B cell (primary cell): ENCODE measurements at regions of chr6 and their contacts with region 1.

Region 1: GRCh38 chr6:134166511-134167261 is 114.3 kb upstream of the SLC2A12 start:
- DNase-seq: no peak
- ATAC-seq: no peak
- H3K4me3 ChIP-seq: no peak overlapping the region
- H3K4me3 Mint-ChIP-seq: no peak overlapping the region
- H3K27ac ChIP-seq: no peak overlapping the region
- H3K27ac Mint-ChIP-seq: no peak overlapping the region
- H3K4me1 ChIP-seq: no peaks in the 10 kb centered on the region
- H3K4me1 Mint-ChIP-seq: peaks cover 5% of the 10 kb centered on the region
- H3K27me3 ChIP-seq: no peaks in the 10 kb centered on the region
- H3K27me3 Mint-ChIP-seq: no peaks in the 10 kb centered on the region
- CTCF ChIP-seq: no peak

Region 2: DNA sequence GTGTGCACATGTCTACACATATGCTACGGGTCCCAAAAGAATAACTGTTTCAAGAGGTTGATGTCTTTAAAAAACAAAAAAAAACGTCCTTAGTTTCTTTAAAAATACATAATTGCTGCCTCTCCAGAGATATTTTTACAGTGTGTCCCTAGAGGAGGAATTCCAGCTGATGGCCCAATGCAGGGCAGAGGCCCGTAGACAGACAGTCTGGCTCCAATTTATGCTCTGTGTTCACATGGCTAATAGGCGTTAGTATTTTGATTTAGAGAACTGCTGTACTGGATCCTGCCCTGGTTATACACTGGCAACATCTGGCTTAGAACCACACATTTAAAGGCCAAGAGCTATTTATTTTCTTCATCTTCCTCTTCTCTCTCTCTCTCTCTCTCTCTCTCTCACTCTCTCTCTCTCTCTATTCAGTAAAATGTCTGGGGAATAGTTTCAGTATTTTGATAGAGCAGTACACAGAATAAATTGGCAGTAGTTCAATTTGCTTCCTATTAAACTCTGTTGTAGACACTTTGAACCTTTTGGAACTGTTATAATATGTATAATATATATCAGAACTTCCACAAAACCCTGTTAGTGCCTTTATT is 664.9 kb before region 1 on chr6:
- CTCF ChIA-PET with region 1: no interaction called
- POLR2A ChIA-PET with region 1: no interaction called
- intact Hi-C with region 1: no loop called
- DNase-seq: no peak
- ATAC-seq: no peak
- H3K4me3 ChIP-seq: no peak overlapping the region
- H3K4me3 Mint-ChIP-seq: no peak overlapping the region
- H3K27ac ChIP-seq: no peak overlapping the region
- H3K27ac Mint-ChIP-seq: no peak overlapping the region
- H3K4me1 ChIP-seq: no peaks in the 10 kb centered on the region
- H3K4me1 Mint-ChIP-seq: no peaks in the 10 kb centered on the region
- H3K27me3 ChIP-seq: peaks cover 0 to 5% (median 0%) of the 10 kb centered on the region in 4 experiments
- H3K27me3 Mint-ChIP-seq: peaks cover 18% of the 10 kb centered on the region
- CTCF ChIP-seq: no peak

Region 3: GRCh38 chr6:134145786-134146185 is 20.9 kb before region 1 on chr6:
- CTCF ChIA-PET with region 1: no interaction called
- POLR2A ChIA-PET with region 1: interaction called, 11 read pairs
- intact Hi-C with region 1: no loop called
- DNase-seq: peak; percentile 29
- ATAC-seq: peak; percentile 51
- H3K4me3 ChIP-seq: no peak overlapping the region
- H3K4me3 Mint-ChIP-seq: no peak overlapping the region
- H3K27ac ChIP-seq: no peak overlapping the region
- H3K27ac Mint-ChIP-seq: no peak overlapping the region
- H3K4me1 ChIP-seq: no peaks in the 10 kb centered on the region
- H3K4me1 Mint-ChIP-seq: peaks cover 2% of the 10 kb centered on the region
- H3K27me3 ChIP-seq: no peaks in the 10 kb centered on the region
- H3K27me3 Mint-ChIP-seq: no peaks in the 10 kb centered on the region
- CTCF ChIP-seq: no peak